Heart left ventricle (tissue), 16 donors: ENCODE measurements at regions of chr7 and their contacts with region 1.

Region 1: GRCh38 chr7:31122649-31123058 is 70.5 kb downstream of the ADCYAP1R1 start:
- DNase-seq: peak in 4 of 5 donors; percentile 50 to 66 (median 57)
- ATAC-seq: peak; percentile 40 to 82 (median 79)
- H3K4me3 ChIP-seq: no peak overlapping the region
- H3K27ac ChIP-seq: no peak overlapping the region
- H3K4me1 ChIP-seq: peaks cover 0 to 5% (median 0%) of the 10 kb centered on the region in 12 donors
- H3K27me3 ChIP-seq: no peaks in the 10 kb centered on the region
- CTCF ChIP-seq: peak; percentile 72 to 94 (median 86)
- POLR2A ChIP-seq: no peak

Region 2: DNA sequence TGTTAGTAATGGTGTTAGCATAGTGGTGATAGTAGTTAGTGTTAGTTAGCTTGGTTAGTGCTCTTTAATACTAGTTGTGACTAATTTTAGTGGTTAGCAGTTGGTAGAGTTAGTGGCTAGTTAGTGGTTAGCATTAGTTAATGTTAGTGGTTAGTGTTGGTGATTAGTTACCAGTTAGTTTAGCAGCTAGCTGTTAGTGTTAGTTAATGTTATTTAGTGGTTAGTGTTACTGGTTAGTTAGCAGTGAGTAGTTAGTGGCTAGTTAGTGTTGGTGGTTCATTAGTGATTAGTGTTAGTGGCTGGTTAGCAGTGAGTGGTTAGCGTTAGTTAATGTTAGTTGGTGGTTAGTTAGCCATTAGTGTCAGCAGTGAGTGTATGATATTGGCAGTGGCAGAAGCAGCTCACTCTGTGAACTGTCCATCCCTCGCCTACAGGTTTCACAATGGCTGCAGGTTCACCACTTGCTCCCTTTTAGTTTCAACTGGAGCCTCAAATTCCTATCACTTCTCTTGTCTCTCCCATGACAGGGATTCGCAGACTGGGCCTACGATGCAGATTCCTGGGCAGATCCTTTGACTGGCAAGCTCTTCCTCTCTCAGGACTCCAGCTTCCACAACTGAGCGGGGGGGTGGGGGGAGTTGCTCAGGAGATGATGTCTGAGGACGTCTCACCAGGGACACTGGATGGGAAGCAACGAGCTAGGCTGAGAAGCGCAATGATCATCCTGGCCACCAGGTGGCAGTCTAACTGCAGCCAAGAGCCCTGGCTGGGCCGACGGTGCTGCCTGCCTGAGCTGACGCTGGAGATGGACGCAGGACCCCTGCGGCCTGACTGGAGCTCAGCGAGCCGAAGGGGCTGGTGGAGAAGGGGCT is 139.4 kb before region 1 on chr7:
- intact Hi-C with region 1: loop called (anchors 1 to 2 kb)
- DNase-seq: peak; percentile 78 to 90 (median 83)
- ATAC-seq: peak; percentile 27 to 93 (median 86)
- H3K4me3 ChIP-seq: no peak overlapping the region
- H3K27ac ChIP-seq: no peak overlapping the region
- H3K4me1 ChIP-seq: peaks cover 0 to 13% (median 5%) of the 10 kb centered on the region in 12 donors
- H3K27me3 ChIP-seq: peaks cover 0 to 11% (median 0%) of the 10 kb centered on the region in 9 donors
- CTCF ChIP-seq: peak; percentile 79 to 98 (median 94)
- POLR2A ChIP-seq: no peak

Region 3: GRCh38 chr7:31073326-31074119 is 49.1 kb before region 1 on chr7:
- intact Hi-C with region 1: loop called in 1 of 10 experiments (anchors 2 kb)
- DNase-seq: peak in 2 of 5 donors; percentile 20 to 41
- ATAC-seq: no peak
- H3K4me3 ChIP-seq: no peak overlapping the region
- H3K27ac ChIP-seq: peak overlapping the region in 3 of 12 donors; percentile 4 to 37 (median 7)
- H3K4me1 ChIP-seq: peaks cover 0 to 18% (median 4%) of the 10 kb centered on the region in 12 donors
- H3K27me3 ChIP-seq: no peaks in the 10 kb centered on the region
- CTCF ChIP-seq: no peak
- POLR2A ChIP-seq: no peak

Region 4: GRCh38 chr7:31160941-31161340 is 38.3 kb after region 1 on chr7:
- intact Hi-C with region 1: no loop called
- DNase-seq: no peak
- ATAC-seq: no peak
- H3K4me3 ChIP-seq: no peak overlapping the region
- H3K27ac ChIP-seq: no peak overlapping the region
- H3K4me1 ChIP-seq: no peaks in the 10 kb centered on the region
- H3K27me3 ChIP-seq: peaks cover 0 to 22% (median 0%) of the 10 kb centered on the region in 9 donors
- CTCF ChIP-seq: no peak
- POLR2A ChIP-seq: no peak